Activated CD4-positive, alpha-beta memory T cell treated with anti-CD3 and anti-CD28 coated beads for 36 hours (primary cell): ENCODE measurements at regions of chr3 and their contacts with region 1.

Region 1: DNA sequence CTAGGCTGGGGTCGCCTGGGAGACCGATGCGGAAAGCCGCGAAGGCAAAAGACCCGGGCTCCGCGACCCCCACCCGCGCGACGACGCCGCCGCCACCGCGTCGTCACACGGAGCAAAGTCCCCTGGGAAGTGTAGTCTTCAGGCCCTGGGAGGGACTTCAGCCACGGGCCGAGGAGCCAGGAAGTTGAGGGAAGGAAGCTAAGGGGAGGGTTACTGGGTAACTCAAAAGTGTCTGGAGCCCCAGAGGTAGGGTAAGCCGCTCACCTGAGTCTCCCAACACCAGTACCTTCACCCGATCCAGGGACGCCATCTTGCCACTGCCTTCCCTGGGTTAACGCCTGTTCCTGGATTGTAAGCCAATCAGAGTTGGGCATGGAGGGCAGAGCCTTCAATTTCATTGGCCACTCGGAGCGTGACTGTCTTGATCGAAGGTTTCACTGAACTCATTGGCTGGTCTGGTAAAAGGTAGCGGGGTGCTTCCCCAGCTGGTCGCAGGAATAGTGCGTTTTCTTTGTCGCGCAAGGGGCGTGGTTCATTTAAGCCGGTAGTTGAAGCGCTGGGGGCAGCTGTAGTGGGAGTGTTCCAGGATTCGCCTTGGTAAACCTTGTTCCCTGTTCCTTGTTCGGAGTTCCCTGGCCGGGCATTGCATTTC is at the starts of genes GTF2E1 and RABL3:
- DNase-seq: peak; percentile 98
- H3K4me3 Mint-ChIP-seq: peak within 1 kb of the TSS; percentile 96
- H3K27ac Mint-ChIP-seq: peak within 1 kb of the TSS; percentile 94
- H3K4me1 Mint-ChIP-seq: peaks cover 28% of the 10 kb centered on the region
- H3K27me3 Mint-ChIP-seq: peaks cover 2% of the 10 kb centered on the region
- total RNA-seq, gene GTF2E1: 18.4 to 19.8 TPM
- total RNA-seq, gene RABL3: 28.7 to 30.0 TPM

Region 2: GRCh38 chr3:120558771-120559241 is 183.5 kb before region 1 on chr3:
- CTCF ChIA-PET with region 1: interaction called, 10 read pairs
- POLR2A ChIA-PET with region 1: no interaction called
- intact Hi-C with region 1: loop called (anchors 1 kb)
- DNase-seq: peak; percentile 90
- H3K4me3 Mint-ChIP-seq: peak overlapping the region; percentile 73
- H3K27ac Mint-ChIP-seq: peak overlapping the region; percentile 30
- H3K4me1 Mint-ChIP-seq: peaks cover 15% of the 10 kb centered on the region
- H3K27me3 Mint-ChIP-seq: peaks cover 2% of the 10 kb centered on the region

Region 3: GRCh38 chr3:120773932-120774331 is 31.6 kb after region 1 on chr3:
- CTCF ChIA-PET with region 1: no interaction called
- POLR2A ChIA-PET with region 1: no interaction called
- intact Hi-C with region 1: loop called (anchors 1 kb)
- DNase-seq: no peak
- H3K4me3 Mint-ChIP-seq: no peak overlapping the region
- H3K27ac Mint-ChIP-seq: no peak overlapping the region
- H3K4me1 Mint-ChIP-seq: peaks cover 7% of the 10 kb centered on the region
- H3K27me3 Mint-ChIP-seq: no peaks in the 10 kb centered on the region

Region 4: GRCh38 chr3:121749276-121750086 is 1007.2 kb after region 1 on chr3 and contains the start of gene GOLGB1:
- CTCF ChIA-PET with region 1: no interaction called
- POLR2A ChIA-PET with region 1: no interaction called
- intact Hi-C with region 1: loop called (anchors 2 kb)
- DNase-seq: peak; percentile 97
- H3K4me3 Mint-ChIP-seq: no peak within 1 kb of the TSS
- H3K27ac Mint-ChIP-seq: no peak within 1 kb of the TSS
- H3K4me1 Mint-ChIP-seq: peaks cover 10% of the 10 kb centered on the region
- H3K27me3 Mint-ChIP-seq: no peaks in the 10 kb centered on the region
- total RNA-seq, gene GOLGB1: 22.7 to 26.0 TPM

Region 5: DNA sequence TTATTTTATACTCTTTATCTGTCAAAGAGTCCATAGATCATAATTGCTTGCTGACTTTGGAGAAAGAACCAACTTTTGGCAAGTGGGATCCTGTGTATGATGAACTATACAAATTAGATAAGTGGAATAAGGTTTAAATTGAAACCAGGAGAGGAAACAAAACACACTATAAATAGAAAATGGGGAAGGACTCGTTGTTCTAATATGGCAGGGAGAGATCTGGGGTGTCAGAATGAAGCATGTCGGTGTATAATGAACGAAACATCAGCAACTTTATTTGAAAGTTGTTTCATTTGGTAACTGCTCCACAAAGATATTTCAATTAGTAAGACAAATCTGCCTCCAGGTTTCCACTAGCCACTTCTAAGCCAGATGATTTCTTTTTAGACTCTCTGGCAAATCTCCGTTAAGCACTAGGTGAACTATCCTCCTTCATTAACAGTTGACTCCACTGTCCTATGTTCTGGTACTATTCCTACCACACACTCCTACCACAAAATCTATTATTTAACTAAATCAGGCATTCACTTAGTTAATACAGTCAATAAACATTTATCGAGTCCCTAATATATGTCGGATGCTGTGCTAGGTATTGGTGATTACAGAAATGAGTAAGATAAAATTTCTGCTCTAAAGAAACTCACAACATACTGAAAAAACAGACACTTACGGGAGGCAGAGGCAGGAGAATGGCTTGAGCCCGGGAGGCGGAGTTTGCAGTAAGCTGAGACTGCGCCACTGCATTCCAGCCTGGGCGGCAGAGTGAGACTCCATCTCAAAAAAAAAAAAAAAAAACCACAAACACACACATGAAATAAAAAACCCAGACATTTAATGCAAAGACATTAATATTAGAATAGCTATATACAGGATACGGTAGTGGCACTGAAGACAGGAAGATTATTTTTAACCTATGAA is 1172.0 kb after region 1 on chr3:
- CTCF ChIA-PET with region 1: no interaction called
- POLR2A ChIA-PET with region 1: no interaction called
- intact Hi-C with region 1: no loop called
- DNase-seq: no peak
- H3K4me3 Mint-ChIP-seq: no peak overlapping the region
- H3K27ac Mint-ChIP-seq: no peak overlapping the region
- H3K4me1 Mint-ChIP-seq: peaks cover 5% of the 10 kb centered on the region
- H3K27me3 Mint-ChIP-seq: no peaks in the 10 kb centered on the region